Activated T-helper 2 cell treated with anti-CD3 and anti-CD28 coated beads, Interferon-gamma antibody, Interleukin-2, Interleukin-4, amounts not matched to agents 10 μg/mL and 5 μg/mL and 100 μg/mL, durations not matched to agents 14 hours and 24 hours and 36 hours (primary cell): ENCODE measurements at regions of chr9 and their contacts with region 1.

Region 1: DNA sequence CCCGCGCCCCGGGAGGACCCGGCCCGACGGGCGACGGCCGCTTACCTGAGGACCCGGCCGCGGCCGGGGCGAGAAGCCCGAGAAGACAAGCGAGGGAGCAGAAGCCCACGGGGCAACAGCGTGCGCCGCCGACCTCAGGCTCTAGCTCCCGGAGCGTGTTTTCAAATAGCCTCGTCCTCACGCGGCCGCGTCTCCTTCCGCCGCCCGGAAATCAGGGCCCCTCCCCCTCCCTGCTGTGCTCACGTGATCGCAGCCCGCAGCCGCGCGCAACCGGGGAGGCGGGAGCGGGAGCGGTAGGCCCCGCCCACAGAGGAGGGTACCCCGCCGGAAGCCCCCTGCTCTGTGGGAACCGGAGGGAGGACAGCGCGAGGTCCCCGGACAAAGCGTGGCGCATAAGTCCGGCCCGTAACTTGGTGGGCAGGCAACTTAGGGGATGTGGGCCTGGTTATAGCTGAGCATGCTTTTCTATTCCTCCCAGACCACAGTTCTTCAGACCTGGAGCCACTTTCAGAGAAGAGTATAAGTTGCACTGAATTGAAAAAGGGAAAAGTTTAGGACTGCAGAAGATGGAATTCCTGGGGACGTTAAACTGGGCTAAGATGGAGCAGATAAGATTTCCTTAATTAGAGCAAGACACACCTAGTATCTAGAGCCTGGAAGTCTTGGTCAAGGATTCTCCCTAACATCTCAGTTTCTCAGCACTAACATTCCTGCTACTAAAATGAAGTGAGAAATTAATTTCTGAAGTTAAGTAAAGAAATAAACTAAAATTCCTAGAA is at the start of gene TEX10:
- DNase-seq: peak; percentile 86
- H3K4me3 Mint-ChIP-seq: peak within 1 kb of the TSS; percentile 96
- H3K27ac Mint-ChIP-seq: peak within 1 kb of the TSS; percentile 80
- H3K4me1 Mint-ChIP-seq: peaks cover 38% of the 10 kb centered on the region
- H3K27me3 Mint-ChIP-seq: no peaks in the 10 kb centered on the region
- total RNA-seq, gene TEX10: 26.9 and 30.0 TPM in 2 replicates

Region 2: GRCh38 chr9:100303747-100304146 is 49.2 kb before region 1 on chr9:
- intact Hi-C with region 1: no loop called
- DNase-seq: no peak
- H3K4me3 Mint-ChIP-seq: no peak overlapping the region
- H3K27ac Mint-ChIP-seq: no peak overlapping the region
- H3K4me1 Mint-ChIP-seq: no peaks in the 10 kb centered on the region
- H3K27me3 Mint-ChIP-seq: no peaks in the 10 kb centered on the region

Region 3: GRCh38 chr9:100431886-100432285 is 79.0 kb after region 1 on chr9:
- intact Hi-C with region 1: no loop called
- DNase-seq: no peak
- H3K4me3 Mint-ChIP-seq: no peak overlapping the region
- H3K27ac Mint-ChIP-seq: no peak overlapping the region
- H3K4me1 Mint-ChIP-seq: peaks cover 18% of the 10 kb centered on the region
- H3K27me3 Mint-ChIP-seq: no peaks in the 10 kb centered on the region

Region 4: GRCh38 chr9:101398068-101398929 is 1045.4 kb after region 1 on chr9 and contains the starts of genes MRPL50 and ZNF189:
- intact Hi-C with region 1: loop called (anchors 10 kb)
- DNase-seq: peak; percentile 95
- H3K4me3 Mint-ChIP-seq: peak within 1 kb of the TSS; percentile 94
- H3K27ac Mint-ChIP-seq: peak within 1 kb of the TSS; percentile 96
- H3K4me1 Mint-ChIP-seq: peaks cover 41% of the 10 kb centered on the region
- H3K27me3 Mint-ChIP-seq: no peaks in the 10 kb centered on the region
- total RNA-seq, gene MRPL50: 14.2 and 14.8 TPM in 2 replicates
- total RNA-seq, gene ZNF189: 10.6 and 11.0 TPM in 2 replicates